CD4-positive, alpha-beta T cell (primary cell): ENCODE measurements at regions of chr6 and their contacts with region 1.

Region 1: GRCh38 chr6:43174263-43175112 is 3.4 kb downstream of the SRF start:
- DNase-seq: peak; percentile 73 to 99 (median 91)
- ATAC-seq: peak; percentile 51
- H3K4me3 ChIP-seq: peak overlapping the region; percentile 83
- H3K4me3 Mint-ChIP-seq: peak overlapping the region; percentile 89
- H3K27ac ChIP-seq: peak overlapping the region; percentile 78 to 83
- H3K27ac Mint-ChIP-seq: peak overlapping the region; percentile 88
- H3K4me1 ChIP-seq: peaks cover 52% of the 10 kb centered on the region
- H3K4me1 Mint-ChIP-seq: peaks cover 42% of the 10 kb centered on the region
- H3K27me3 ChIP-seq: no peaks in the 10 kb centered on the region
- H3K27me3 Mint-ChIP-seq: no peaks in the 10 kb centered on the region
- CTCF ChIP-seq: no peak

Region 2: DNA sequence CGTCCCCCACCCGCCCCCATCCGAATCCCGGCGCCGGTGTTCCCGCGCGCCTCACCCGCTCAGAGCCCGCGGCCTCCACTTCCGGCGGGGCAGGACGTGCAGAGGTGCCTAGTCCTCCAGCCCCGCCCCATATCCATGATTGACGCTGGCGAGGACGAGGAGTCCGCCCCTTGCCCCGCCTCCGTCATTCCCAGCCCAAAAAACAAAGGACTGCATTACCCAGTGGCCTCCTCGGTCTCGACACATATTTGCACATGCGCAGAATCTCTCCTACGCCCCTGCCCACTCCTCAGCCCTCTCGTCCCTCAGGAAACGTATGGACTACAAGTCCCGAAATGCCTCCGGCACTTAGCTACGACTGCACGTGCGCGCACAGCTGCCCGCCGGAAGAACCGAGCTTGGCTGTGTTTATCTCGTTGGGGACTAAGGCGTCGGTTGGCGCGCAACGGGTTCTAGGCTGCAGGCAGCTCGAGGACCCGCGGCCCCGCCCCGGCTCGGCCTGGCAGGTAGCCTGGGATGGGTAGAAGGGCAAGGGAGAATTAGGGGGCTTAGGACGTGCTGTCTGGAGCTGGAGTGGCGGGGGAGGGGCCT is 160.6 kb before region 1 on chr6 and contains the starts of genes KLHDC3 and MEA1:
- CTCF ChIA-PET with region 1: no interaction called
- POLR2A ChIA-PET with region 1: interaction called, 3 read pairs
- intact Hi-C with region 1: loop called in 1 of 2 experiments (anchors 5 kb)
- DNase-seq: peak; percentile 95 to 100 (median 98)
- ATAC-seq: peak; percentile 91
- H3K4me3 ChIP-seq: peak within 1 kb of the TSS; percentile 86
- H3K4me3 Mint-ChIP-seq: peak within 1 kb of the TSS; percentile 88
- H3K27ac ChIP-seq: peak within 1 kb of the TSS; percentile 51 to 59
- H3K27ac Mint-ChIP-seq: peak within 1 kb of the TSS; percentile 81
- H3K4me1 ChIP-seq: peaks cover 55% of the 10 kb centered on the region
- H3K4me1 Mint-ChIP-seq: peaks cover 59% of the 10 kb centered on the region
- H3K27me3 ChIP-seq: no peaks in the 10 kb centered on the region
- H3K27me3 Mint-ChIP-seq: no peaks in the 10 kb centered on the region
- CTCF ChIP-seq: no peak
- total RNA-seq, gene KLHDC3: 21.0 to 22.3 TPM
- total RNA-seq, gene MEA1: 13.6 to 17.0 TPM

Region 3: DNA sequence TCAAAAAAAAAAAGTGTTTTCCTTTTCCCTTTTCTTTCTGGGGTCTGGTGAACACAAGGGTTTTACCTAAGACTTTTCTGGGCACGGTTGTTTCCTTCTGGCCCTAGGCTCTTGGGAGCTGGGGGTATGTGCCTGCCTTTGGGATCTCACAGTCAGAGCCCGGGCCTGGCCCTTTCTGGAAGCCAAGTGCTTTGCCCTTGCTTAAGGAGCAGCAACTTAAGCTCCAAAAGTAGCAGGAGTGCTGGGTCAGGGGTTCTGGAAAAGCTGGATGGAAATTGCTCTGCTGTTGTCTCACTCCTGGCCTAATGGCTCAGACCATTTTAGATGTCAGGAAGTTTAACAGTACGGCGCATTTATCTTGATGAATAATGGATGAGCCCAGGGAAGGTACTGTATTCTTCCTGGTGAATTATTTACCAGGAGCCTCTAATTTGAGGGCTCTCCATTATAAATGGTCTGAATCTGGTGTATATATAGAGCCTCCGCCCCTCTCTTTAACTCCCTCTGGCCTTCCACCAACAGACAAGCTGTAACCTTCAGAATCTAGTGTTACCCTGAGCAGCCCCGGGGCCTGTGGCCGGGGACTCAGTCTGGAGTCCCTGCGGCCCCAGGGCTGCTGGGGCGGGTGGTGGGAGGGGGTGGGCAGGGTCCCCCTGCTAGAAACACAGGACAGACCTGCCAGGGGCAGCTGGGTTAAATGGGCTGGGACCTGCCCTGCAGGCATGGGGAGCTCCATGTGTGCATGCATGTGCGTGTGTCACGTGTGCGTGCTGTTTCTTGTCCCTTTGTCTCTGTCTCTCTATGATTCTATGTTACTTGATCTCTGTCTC is 60.8 kb before region 1 on chr6:
- CTCF ChIA-PET with region 1: no interaction called
- POLR2A ChIA-PET with region 1: no interaction called
- intact Hi-C with region 1: no loop called
- DNase-seq: no peak
- ATAC-seq: no peak
- H3K4me3 ChIP-seq: no peak overlapping the region
- H3K4me3 Mint-ChIP-seq: no peak overlapping the region
- H3K27ac ChIP-seq: no peak overlapping the region
- H3K27ac Mint-ChIP-seq: no peak overlapping the region
- H3K4me1 ChIP-seq: no peaks in the 10 kb centered on the region
- H3K4me1 Mint-ChIP-seq: no peaks in the 10 kb centered on the region
- H3K27me3 ChIP-seq: no peaks in the 10 kb centered on the region
- H3K27me3 Mint-ChIP-seq: no peaks in the 10 kb centered on the region
- CTCF ChIP-seq: no peak

Region 4: DNA sequence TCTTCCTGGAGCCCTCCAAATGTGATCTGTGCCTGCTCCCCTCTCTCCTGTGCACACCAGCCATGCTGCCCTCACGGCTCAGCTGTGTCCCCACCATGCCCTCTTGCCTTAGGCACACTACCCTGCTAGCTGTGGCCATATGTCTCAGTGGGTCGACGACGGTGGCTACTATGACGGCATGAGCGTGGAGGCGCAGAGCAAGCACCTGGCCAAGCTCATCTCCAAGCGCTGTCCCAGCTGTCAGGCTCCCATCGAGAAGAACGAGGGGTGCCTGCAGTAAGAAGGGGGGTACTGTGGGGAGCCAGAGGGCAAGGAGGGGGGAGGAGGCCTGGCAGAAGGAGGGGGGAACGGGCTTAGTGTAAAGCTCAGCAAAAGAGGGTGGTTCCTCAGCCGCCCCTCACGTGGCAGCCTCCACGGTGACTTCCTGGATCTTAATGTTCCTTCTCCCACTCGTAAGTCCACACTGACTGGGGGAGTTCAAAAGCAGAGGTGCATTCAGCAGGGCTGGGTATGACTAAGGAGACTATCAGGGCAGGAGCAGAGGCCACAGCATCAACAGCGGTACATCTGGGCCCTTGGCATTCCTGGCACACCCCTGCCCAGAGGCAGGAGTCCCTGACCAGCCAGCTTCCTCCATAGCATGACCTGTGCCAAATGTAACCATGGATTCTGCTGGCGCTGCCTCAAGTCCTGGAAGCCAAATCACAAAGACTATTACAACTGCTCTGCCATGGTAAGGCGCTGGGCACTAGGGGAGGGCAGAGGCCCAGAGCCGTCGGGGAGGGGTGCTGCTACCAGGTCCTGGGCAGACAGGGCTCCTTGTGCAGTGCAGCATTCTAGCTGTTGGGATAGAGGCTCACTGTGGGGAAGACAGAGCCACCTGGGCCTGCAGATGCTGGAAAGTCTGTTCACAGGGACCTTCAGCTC is 46.8 kb after region 1 on chr6:
- CTCF ChIA-PET with region 1: interaction called, 3 read pairs
- POLR2A ChIA-PET with region 1: interaction called, 12 read pairs
- intact Hi-C with region 1: loop called in 1 of 2 experiments (anchors 5 kb)
- DNase-seq: peak in 1 of 14 experiments; percentile 28
- ATAC-seq: no peak
- H3K4me3 ChIP-seq: no peak overlapping the region
- H3K4me3 Mint-ChIP-seq: no peak overlapping the region
- H3K27ac ChIP-seq: peak overlapping the region in 1 of 2 donors; percentile 29
- H3K27ac Mint-ChIP-seq: peak overlapping the region; percentile 100
- H3K4me1 ChIP-seq: peaks cover 56% of the 10 kb centered on the region
- H3K4me1 Mint-ChIP-seq: peaks cover 54% of the 10 kb centered on the region
- H3K27me3 ChIP-seq: no peaks in the 10 kb centered on the region
- H3K27me3 Mint-ChIP-seq: no peaks in the 10 kb centered on the region
- CTCF ChIP-seq: no peak

Region 5: DNA sequence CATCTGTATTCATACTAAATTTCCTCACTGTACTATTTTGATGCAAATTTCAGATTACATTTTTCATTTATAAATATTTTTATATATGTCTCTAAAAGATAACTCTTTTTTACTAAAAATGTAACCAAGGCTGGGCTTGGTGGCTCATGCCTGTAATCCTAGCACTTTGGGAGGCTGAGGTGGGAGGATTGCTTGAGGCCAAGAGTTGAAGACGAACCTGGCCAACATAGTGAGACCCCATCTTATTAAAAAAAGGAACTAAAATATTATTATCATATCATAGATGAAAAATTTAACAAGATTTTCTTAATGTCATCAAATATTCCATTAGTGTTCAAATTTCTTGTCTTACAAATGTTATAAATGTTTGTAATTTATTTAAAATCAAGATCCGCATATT is 61.4 kb after region 1 on chr6:
- CTCF ChIA-PET with region 1: no interaction called
- POLR2A ChIA-PET with region 1: no interaction called
- intact Hi-C with region 1: no loop called
- DNase-seq: no peak
- ATAC-seq: no peak
- H3K4me3 ChIP-seq: no peak overlapping the region
- H3K4me3 Mint-ChIP-seq: no peak overlapping the region
- H3K27ac ChIP-seq: no peak overlapping the region
- H3K27ac Mint-ChIP-seq: no peak overlapping the region
- H3K4me1 ChIP-seq: no peaks in the 10 kb centered on the region
- H3K4me1 Mint-ChIP-seq: peaks cover 6% of the 10 kb centered on the region
- H3K27me3 ChIP-seq: no peaks in the 10 kb centered on the region
- H3K27me3 Mint-ChIP-seq: peaks cover 35% of the 10 kb centered on the region
- CTCF ChIP-seq: no peak

Region 6: DNA sequence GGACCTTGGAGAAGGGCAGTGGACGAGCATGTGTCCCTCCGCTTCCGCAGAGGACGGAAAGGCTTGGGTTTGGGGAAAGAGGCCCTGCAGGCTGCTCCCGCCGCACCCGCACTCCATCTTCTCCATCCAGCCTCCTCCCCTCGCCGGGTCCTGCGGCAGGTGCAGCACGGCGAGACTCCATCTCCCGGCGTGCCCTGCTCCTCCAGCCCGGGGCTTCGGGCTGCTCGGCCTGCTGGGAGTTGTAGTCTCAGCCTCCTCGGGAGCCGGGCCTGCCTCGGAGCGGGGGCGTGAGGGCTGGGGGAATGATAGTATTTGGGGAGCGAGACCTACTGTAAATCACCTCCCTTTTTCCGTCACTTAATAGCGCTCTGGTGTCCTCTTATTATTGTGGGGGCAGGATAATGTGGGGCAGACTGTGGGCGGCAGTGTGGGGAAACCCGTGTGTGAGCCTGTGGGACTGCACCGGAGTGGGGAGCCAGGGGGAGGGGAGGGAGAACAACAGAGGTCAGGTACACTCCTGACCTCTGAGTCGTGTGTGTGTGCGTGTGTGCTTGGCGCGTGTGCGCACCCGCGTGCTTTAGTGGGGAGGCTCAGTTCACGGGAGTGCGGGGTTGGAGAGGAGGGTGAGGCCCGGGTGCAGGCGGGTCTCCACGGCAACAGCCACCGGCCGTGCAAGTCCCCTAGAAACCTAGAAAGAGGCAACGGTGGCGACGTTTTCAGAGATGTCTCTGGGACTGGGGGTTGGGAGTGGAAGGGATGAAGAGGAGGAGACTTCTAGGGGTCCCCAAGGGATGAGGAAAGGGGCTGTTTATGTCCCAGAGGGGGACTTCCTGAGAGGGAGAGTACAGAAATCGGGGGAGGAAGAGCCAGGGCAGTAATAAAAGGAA is 72.9 kb after region 1 on chr6:
- CTCF ChIA-PET with region 1: interaction called, 3 read pairs
- POLR2A ChIA-PET with region 1: interaction called, 3 read pairs
- intact Hi-C with region 1: loop called in 1 of 2 experiments (anchors 5 kb)
- DNase-seq: peak; percentile 65 to 89 (median 76)
- ATAC-seq: peak; percentile 97
- H3K4me3 ChIP-seq: peak overlapping the region; percentile 58
- H3K4me3 Mint-ChIP-seq: no peak overlapping the region
- H3K27ac ChIP-seq: peak overlapping the region; percentile 24 to 42
- H3K27ac Mint-ChIP-seq: peak overlapping the region; percentile 70
- H3K4me1 ChIP-seq: peaks cover 26% of the 10 kb centered on the region
- H3K4me1 Mint-ChIP-seq: peaks cover 22% of the 10 kb centered on the region
- H3K27me3 ChIP-seq: peaks cover 34 to 35% of the 10 kb centered on the region in 2 experiments
- H3K27me3 Mint-ChIP-seq: peaks cover 15% of the 10 kb centered on the region
- CTCF ChIP-seq: no peak

Region 7: DNA sequence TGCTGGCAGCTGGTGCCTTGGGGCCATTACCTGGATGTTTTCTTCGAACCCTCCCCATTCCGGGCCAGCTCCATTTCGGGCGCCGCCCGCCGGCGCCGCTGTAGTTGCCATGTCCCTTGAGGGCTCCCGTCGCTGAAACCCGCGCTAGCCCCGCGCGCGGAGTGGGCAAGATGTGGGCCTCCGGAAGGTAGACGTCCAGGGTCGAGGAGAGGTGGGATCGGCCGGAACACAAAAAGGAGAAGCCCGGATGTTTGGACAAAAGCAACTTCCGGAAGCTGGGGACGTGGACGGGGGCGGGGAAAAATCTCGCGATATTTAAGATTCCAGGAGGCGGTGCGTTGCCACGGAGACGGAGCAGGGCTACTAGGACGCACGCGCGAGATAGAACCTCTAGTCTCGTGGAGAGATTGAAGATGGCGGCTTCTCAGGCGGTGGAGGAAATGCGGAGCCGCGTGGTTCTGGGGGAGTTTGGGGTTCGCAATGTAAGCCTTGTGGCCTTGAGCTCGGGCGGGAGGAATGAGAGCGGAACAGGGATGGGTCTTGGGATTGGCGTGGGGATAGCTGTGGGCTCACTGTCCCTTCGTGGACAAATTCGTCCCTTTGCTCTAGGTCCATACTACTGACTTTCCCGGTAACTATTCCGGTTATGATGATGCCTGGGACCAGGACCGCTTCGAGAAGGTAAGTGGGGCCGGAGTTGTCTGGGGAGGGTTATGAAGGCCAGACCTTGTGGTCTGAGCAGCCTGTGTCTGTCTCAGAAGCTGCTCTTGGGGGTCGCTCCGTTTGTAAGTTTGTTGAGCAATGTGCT is 342.4 kb after region 1 on chr6 and contains the starts of genes POLR1C and YIPF3:
- CTCF ChIA-PET with region 1: no interaction called
- POLR2A ChIA-PET with region 1: interaction called, 4 read pairs
- intact Hi-C with region 1: loop called in 1 of 2 experiments (anchors 5 kb)
- DNase-seq: peak; percentile 91 to 98 (median 96)
- ATAC-seq: peak; percentile 96
- H3K4me3 ChIP-seq: peak within 1 kb of the TSS; percentile 100
- H3K4me3 Mint-ChIP-seq: no peak within 1 kb of the TSS
- H3K27ac ChIP-seq: peak within 1 kb of the TSS; percentile 81 to 90
- H3K27ac Mint-ChIP-seq: no peak within 1 kb of the TSS
- H3K4me1 ChIP-seq: peaks cover 43% of the 10 kb centered on the region
- H3K4me1 Mint-ChIP-seq: peaks cover 33% of the 10 kb centered on the region
- H3K27me3 ChIP-seq: no peaks in the 10 kb centered on the region
- H3K27me3 Mint-ChIP-seq: no peaks in the 10 kb centered on the region
- CTCF ChIP-seq: no peak
- total RNA-seq, gene POLR1C: 46.6 to 47.8 TPM
- total RNA-seq, gene YIPF3: 36.5 to 37.9 TPM

Region 8: GRCh38 chr6:44034391-44034861 is 859.9 kb after region 1 on chr6:
- CTCF ChIA-PET with region 1: no interaction called
- POLR2A ChIA-PET with region 1: no interaction called
- intact Hi-C with region 1: no loop called
- DNase-seq: peak in 1 of 14 experiments; percentile 19
- ATAC-seq: no peak
- H3K4me3 ChIP-seq: no peak overlapping the region
- H3K4me3 Mint-ChIP-seq: no peak overlapping the region
- H3K27ac ChIP-seq: no peak overlapping the region
- H3K27ac Mint-ChIP-seq: no peak overlapping the region
- H3K4me1 ChIP-seq: no peaks in the 10 kb centered on the region
- H3K4me1 Mint-ChIP-seq: no peaks in the 10 kb centered on the region
- H3K27me3 ChIP-seq: peaks cover 0 to 5% of the 10 kb centered on the region in 2 experiments
- H3K27me3 Mint-ChIP-seq: no peaks in the 10 kb centered on the region
- CTCF ChIP-seq: no peak